HepG2 (cell line): ENCODE measurements at regions of chr13 and their contacts with region 1.

Region 1: DNA sequence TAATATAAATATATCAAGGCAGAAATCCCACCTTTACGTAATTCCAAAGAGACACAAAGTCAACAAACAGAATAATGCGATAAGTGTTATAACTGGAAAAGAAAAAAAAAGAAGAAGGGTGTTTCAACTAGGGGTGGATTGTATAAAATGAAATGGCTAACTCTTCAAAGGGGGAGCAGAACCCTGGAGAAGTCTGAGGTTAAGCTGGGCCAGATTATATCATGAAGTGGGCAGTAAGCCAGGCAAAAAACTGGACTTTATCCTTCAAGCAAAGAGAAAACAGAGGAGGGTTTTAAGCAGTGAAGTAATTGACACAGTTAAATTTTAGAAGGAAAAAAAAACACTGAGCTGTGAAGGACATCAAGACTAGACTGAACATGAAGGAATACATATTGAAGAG is 41.9 kb downstream of the TBC1D4 start:
- DNase-seq: peak; percentile 90
- ATAC-seq: peak; percentile 73
- H3K4me3 ChIP-seq: peak overlapping the region in 1 of 3 experiments; percentile 24; a peak in 1 of 6 replicates
- H3K27ac ChIP-seq: peak overlapping the region; percentile 67
- H3K4me1 ChIP-seq: peaks cover 78% of the 10 kb centered on the region
- H3K27me3 ChIP-seq: no peaks in the 10 kb centered on the region
- CTCF ChIP-seq: no peak
- EP300 ChIP-seq: peak in 1 of 2 experiments; percentile 83; a peak in 2 of 4 replicates
- POLR2A ChIP-seq: no peak
- RAD21 ChIP-seq: no peak

Region 2: DNA sequence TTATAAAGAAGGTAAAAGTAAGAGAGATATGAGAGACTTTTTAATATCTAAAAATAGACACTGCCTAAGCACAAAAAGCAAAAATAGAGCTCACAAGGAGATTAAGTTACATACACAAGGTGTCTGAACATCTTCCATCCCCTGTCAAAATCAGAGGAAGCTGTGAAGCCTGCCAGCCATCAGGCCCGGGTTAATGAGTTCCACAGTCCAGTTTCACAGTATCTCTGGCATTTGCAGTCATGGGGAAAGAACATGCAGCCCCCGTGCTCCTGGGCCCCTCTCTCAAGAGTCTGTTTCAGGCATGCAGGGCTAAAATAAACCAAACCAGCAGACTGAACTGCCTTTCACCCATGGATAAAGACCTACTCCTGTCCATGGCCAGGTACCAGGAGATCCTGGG is 37.3 kb before region 1 on chr13:
- CTCF ChIA-PET with region 1: no interaction called
- POLR2A ChIA-PET with region 1: no interaction called
- in situ Hi-C with region 1: no loop called
- intact Hi-C with region 1: loop called (anchors 5 kb)
- DNase-seq: peak; percentile 45
- ATAC-seq: peak; percentile 86
- H3K4me3 ChIP-seq: no peak overlapping the region
- H3K27ac ChIP-seq: peak overlapping the region; percentile 46
- H3K4me1 ChIP-seq: peaks cover 86% of the 10 kb centered on the region
- H3K27me3 ChIP-seq: no peaks in the 10 kb centered on the region
- CTCF ChIP-seq: no peak
- EP300 ChIP-seq: no peak
- POLR2A ChIP-seq: no peak
- RAD21 ChIP-seq: no peak

Region 3: DNA sequence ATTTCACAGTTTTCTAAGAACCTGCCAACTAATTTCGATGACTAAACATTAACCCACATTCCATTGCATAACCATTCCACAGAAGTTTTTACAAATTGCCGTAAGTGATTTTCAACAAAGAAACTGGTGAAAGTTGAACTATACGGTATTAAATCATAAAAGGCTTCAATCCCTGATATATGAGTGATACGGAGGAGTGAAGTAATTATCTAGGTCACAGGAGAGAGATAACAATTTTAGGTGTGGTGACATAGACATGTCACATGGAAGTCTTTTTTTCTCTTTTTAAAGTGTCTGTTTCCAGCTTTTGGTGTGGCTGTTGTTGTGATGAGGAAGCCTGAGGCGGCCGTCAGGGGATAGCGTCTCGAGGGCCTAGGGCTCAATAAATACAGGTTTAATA is 12.5 kb after region 1 on chr13:
- CTCF ChIA-PET with region 1: no interaction called
- POLR2A ChIA-PET with region 1: no interaction called
- in situ Hi-C with region 1: no loop called
- intact Hi-C with region 1: loop called (anchors 1 kb)
- DNase-seq: no peak
- ATAC-seq: no peak
- H3K4me3 ChIP-seq: no peak overlapping the region
- H3K27ac ChIP-seq: peak overlapping the region; percentile 0
- H3K4me1 ChIP-seq: peaks cover 45% of the 10 kb centered on the region
- H3K27me3 ChIP-seq: no peaks in the 10 kb centered on the region
- CTCF ChIP-seq: no peak
- EP300 ChIP-seq: 0 out of 4 replicates have a peak, but pooled peaks of 1 of the 2 experiments have one; percentile 4
- POLR2A ChIP-seq: no peak
- RAD21 ChIP-seq: no peak

Region 4: DNA sequence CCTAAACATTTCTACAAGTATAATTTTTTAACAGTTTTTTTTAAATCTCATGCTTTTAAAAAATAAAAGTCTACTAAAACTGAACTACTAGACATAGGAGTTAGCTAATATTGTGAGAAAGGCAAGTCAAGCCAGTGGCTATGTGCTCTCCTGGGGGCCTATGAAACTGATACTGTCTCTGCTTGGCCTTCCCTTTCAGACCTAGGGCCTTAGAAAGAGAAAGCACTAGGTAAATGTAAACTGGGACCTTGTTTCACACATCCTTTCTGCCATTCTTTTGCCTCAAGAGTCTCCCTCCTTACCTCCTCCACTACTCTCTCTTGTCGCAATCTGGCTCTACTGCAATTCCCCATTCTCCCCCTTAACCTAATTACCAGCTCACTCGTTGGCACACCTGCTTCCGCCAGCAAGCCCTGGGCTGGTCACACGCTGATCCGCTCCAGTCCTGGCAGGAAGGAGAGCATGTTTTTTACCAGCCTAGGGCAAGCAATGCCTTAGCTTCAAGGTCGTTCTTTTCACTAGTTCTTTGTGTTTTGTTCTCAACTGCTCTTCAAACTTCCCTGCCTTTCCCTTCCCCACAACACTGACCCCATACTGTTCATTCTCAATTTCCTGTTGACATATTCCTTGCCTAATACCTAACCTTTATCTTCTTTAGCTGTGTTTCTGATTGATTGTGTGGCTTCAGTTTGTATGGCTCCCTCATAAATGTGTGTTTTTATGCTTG is 18.8 kb after region 1 on chr13:
- CTCF ChIA-PET with region 1: no interaction called
- POLR2A ChIA-PET with region 1: interaction called, 22 read pairs
- in situ Hi-C with region 1: no loop called
- intact Hi-C with region 1: loop called (anchors 2 kb)
- DNase-seq: peak; percentile 97
- ATAC-seq: peak; percentile 98
- H3K4me3 ChIP-seq: peak overlapping the region; percentile 25 to 49 (median 32); a peak in 5 of 6 replicates
- H3K27ac ChIP-seq: peak overlapping the region; percentile 93
- H3K4me1 ChIP-seq: peaks cover 94% of the 10 kb centered on the region
- H3K27me3 ChIP-seq: no peaks in the 10 kb centered on the region
- CTCF ChIP-seq: no peak
- EP300 ChIP-seq: peak in 1 of 2 experiments; percentile 94; a peak in 2 of 4 replicates
- POLR2A ChIP-seq: peak; percentile 41 to 62; a peak in 3 of 4 replicates
- RAD21 ChIP-seq: peak; percentile 23; the same call in 1 of the 2 replicates